Right lobe of liver (tissue), 6 donors: ENCODE measurements at regions of chr6 and their contacts with region 1.

Region 1: GRCh38 chr6:31870385-31870921 is 7.8 kb upstream of the NEU1 start:
- DNase-seq: no peak
- ATAC-seq: peak in 1 of 4 donors; percentile 10
- H3K4me3 ChIP-seq: no peak overlapping the region
- H3K27ac ChIP-seq: no peak overlapping the region
- H3K4me1 ChIP-seq: peaks cover 0 to 2% (median 0%) of the 10 kb centered on the region in 4 donors
- H3K27me3 ChIP-seq: no peaks in the 10 kb centered on the region
- CTCF ChIP-seq: no peak
- POLR2A ChIP-seq: no peak

Region 2: GRCh38 chr6:31680840-31681671 is 189.4 kb before region 1 on chr6 and contains the start of gene LY6G5C:
- intact Hi-C with region 1: loop called in 1 of 2 experiments (anchors 10 kb)
- DNase-seq: peak; percentile 80 to 84 (median 82)
- ATAC-seq: peak; percentile 84 to 91 (median 86)
- H3K4me3 ChIP-seq: peak within 1 kb of the TSS; percentile 41 to 56 (median 53)
- H3K27ac ChIP-seq: peak within 1 kb of the TSS; percentile 26 to 64 (median 44)
- H3K4me1 ChIP-seq: peaks cover 0 to 16% (median 0%) of the 10 kb centered on the region in 4 donors
- H3K27me3 ChIP-seq: no peaks in the 10 kb centered on the region
- CTCF ChIP-seq: peak; percentile 67 to 75 (median 72)
- POLR2A ChIP-seq: no peak
- total RNA-seq, gene LY6G5C: 0.68 to 1.6 (median 1.2) TPM